WTC11 (cell line): ENCODE measurements at regions of chr19 and their contacts with region 1.

Region 1: DNA sequence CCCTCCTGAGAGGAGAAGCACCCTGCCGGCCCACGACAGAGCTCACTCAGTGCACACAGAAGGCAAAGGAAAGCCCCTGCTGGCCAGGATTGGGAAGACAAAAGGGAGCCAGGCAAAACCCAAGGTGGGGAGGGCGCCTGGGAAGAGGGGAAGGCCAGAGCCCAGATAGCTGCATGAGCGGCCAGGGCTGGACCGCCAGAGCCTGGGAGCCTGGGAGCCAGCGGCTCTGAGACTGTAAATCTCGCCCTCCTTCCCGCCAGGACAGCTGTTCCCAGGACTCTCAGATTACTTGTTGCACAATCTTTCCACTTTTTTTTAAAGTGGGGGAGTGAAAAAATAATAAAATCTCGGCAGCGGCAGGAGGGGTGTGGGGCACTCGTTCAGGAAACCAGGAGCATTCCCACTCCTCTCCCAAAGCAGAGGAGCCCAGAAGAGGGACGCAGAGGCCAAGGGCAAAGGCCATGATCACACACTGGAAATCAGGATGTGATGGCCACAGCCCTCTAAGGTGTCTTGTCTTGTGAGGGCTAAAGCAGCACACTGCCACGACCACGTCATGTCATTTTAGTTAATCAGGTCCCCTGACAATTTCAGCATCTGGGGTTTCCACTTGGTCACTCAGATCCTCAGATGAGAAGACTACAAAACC is 19.6 kb upstream of the EPHX3 start:
- DNase-seq: peak; percentile 83
- ATAC-seq: peak; percentile 91
- H3K4me3 Mint-ChIP-seq: no peak overlapping the region
- H3K27ac Mint-ChIP-seq: peak overlapping the region; percentile 89
- H3K4me1 Mint-ChIP-seq: peaks cover 16% of the 10 kb centered on the region
- H3K27me3 Mint-ChIP-seq: no peaks in the 10 kb centered on the region
- CTCF ChIP-seq: no peak

Region 2: DNA sequence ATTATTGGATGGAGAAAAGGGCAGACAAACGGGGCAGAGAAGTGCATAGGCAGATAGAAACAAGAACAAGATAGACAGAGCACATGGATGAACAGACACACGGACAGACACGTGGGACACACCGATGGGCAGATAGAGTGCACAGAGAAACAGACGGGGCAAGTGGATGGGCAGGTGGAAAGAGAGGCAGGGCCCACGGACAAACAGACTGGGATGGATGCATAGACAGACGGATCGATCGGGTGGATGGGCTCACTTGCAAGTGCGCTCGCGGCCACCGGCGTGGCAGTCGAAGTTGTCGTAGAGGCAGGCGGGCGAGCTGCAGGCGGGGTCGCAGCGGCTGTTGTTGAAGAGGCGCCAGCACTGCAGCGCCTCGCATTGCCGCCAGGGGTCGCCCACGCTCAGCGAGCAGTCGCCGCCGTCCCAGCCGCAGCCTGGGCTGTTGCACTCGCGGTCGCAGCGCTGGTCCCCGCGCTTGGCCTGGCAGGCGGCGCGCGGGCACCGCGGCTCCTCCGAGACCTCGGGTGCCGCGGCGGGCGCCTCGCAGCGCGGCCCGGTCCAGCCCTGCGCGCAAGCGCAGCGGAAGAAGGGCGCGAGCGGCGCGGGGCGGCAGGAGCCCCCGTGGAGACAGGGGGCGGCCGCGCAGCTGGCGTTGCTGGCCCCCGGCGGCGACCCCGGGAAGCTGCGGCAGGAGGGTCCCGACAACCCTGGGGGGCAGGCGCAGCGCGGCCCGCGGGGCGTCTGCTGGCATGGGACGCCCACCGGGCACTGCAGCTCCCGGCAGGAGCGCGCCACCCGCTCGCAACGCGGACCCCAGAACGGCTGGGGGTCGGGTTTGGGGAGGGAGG is 74.4 kb before region 1 on chr19:
- CTCF ChIA-PET with region 1: interaction called, 23 read pairs
- POLR2A ChIA-PET with region 1: no interaction called
- DNase-seq: peak; percentile 92
- ATAC-seq: peak; percentile 68
- H3K4me3 Mint-ChIP-seq: peak overlapping the region; percentile 44
- H3K27ac Mint-ChIP-seq: peak overlapping the region; percentile 10
- H3K4me1 Mint-ChIP-seq: peaks cover 13% of the 10 kb centered on the region
- H3K27me3 Mint-ChIP-seq: no peaks in the 10 kb centered on the region
- CTCF ChIP-seq: peak; percentile 93

Region 3: GRCh38 chr19:15234043-15234873 is 17.6 kb before region 1 on chr19:
- CTCF ChIA-PET with region 1: interaction called, 61 read pairs
- POLR2A ChIA-PET with region 1: interaction called, 4 read pairs
- DNase-seq: no peak
- ATAC-seq: no peak
- H3K4me3 Mint-ChIP-seq: peak overlapping the region; percentile 63
- H3K27ac Mint-ChIP-seq: peak overlapping the region; percentile 82
- H3K4me1 Mint-ChIP-seq: peaks cover 8% of the 10 kb centered on the region; the same call in 1 of the 2 replicates
- H3K27me3 Mint-ChIP-seq: no peaks in the 10 kb centered on the region
- CTCF ChIP-seq: no peak

Region 4: GRCh38 chr19:15264061-15264932 is 12.4 kb after region 1 on chr19:
- CTCF ChIA-PET with region 1: interaction called, 12 read pairs
- POLR2A ChIA-PET with region 1: no interaction called
- DNase-seq: peak; percentile 88
- ATAC-seq: peak; percentile 80
- H3K4me3 Mint-ChIP-seq: no peak overlapping the region
- H3K27ac Mint-ChIP-seq: peak overlapping the region; percentile 72
- H3K4me1 Mint-ChIP-seq: no peaks in the 10 kb centered on the region
- H3K27me3 Mint-ChIP-seq: no peaks in the 10 kb centered on the region
- CTCF ChIP-seq: peak; percentile 72

Region 5: DNA sequence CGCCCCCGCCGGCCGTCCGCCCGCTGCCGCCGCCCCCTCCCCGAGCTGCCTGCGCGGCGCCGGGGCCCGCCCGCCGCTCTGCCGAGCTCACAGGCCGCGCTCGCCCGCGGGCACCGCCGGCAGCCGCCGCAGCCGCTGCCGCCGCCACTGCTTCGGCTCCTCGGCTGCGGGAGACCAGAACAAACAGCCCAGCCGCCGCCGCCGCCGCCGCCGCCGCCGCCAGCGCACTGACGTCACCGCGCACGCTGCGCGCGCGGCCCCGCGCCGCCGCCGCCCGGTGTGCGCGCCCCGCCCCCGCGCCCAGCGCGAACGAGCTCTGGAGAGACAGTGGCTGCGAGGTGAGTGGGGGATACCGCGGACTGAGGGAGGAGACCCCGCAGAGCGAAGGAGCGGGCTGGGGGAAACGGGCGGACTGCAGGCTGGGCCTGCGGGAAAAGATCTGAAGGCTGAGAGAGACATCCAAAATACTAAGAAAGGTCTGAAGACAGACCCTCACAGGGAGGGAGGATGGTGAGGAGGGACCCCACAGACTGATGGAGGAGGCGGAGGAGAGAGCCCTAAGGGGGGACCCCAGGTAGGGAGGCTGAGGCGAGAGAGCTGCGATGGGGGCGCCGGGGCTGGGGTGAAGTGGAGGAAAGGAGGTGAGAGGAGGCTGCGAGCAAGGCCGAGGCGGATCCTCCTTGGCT is 80.6 kb after region 1 on chr19 and contains the start of gene BRD4:
- CTCF ChIA-PET with region 1: interaction called, 12 read pairs
- POLR2A ChIA-PET with region 1: no interaction called
- DNase-seq: peak; percentile 69
- ATAC-seq: peak; percentile 73
- H3K4me3 Mint-ChIP-seq: peak within 1 kb of the TSS; percentile 94
- H3K27ac Mint-ChIP-seq: peak within 1 kb of the TSS; percentile 97
- H3K4me1 Mint-ChIP-seq: peaks cover 30% of the 10 kb centered on the region
- H3K27me3 Mint-ChIP-seq: no peaks in the 10 kb centered on the region
- CTCF ChIP-seq: no peak
- total RNA-seq, gene BRD4: 127 to 130 TPM (median 128 TPM) in 3 replicates